HEK293 (cell line): ENCODE measurements at regions of chr17 and their contacts with region 1.

Region 1: DNA sequence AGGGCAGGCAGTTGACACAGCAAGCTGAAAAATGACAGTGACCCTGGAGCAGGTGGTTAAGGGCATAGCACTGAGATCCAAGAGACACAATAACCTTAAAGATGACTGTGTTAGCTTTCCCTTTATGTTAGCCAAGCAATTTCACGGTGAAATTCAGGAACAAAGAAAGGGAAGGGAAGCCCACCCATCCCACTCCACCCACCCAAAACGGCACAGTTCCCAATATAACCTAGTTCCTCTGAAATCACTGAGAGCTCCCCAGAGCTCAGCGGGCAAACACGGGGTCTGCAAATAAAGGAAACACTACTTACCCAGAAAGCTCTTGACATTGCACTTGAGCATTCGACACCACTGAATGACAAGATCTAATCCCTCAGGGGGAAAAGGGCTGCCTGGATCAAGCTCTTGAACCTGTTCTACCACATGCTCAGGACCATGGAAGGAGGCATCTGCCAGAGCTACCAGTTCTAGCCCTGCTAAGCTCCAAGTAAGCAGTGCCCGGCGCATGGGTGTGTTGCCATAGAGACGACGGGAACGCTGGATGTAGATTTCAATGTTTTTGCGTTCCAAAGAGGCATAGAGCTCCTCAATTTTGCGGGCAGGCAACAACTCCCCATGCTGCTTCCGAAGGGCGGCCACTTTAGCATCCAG is 10.6 kb downstream of the BLTP2 start:
- H3K4me3 ChIP-seq: no peak overlapping the region
- H3K27ac ChIP-seq: no peak overlapping the region
- H3K4me1 ChIP-seq: no peaks in the 10 kb centered on the region
- CTCF ChIP-seq: no peak

Region 2: GRCh38 chr17:28579526-28579925 is 54.8 kb before region 1 on chr17:
- CTCF ChIA-PET with region 1: no interaction called
- POLR2A ChIA-PET with region 1: no interaction called
- H3K4me3 ChIP-seq: no peak overlapping the region
- H3K27ac ChIP-seq: no peak overlapping the region
- H3K4me1 ChIP-seq: no peaks in the 10 kb centered on the region
- CTCF ChIP-seq: no peak

Region 3: DNA sequence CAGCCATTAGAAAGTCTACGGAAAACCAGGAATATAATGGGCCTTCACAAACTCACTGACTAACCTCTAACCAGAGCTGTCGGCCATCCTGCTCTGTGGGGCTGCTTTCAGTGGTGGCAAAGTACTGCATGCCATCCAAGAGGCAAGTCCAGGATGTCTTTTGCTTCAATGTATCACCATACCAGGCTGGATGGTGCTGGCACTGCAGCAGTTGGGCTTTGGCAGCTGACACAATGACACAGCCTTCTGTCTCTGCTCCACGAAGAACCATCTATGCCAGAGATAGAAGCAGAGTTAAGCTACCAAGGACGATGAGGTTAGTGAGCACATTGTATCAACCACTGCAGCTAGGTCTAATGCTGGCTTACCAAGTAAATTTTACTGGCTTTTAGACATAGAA is 10.6 kb before region 1 on chr17:
- CTCF ChIA-PET with region 1: interaction called, 3 read pairs
- POLR2A ChIA-PET with region 1: interaction called, 10 read pairs
- H3K4me3 ChIP-seq: no peak overlapping the region
- H3K27ac ChIP-seq: no peak overlapping the region
- H3K4me1 ChIP-seq: no peaks in the 10 kb centered on the region
- CTCF ChIP-seq: no peak